A673 (cell line): ENCODE measurements at regions of chr12 and their contacts with region 1.

Region 1: DNA sequence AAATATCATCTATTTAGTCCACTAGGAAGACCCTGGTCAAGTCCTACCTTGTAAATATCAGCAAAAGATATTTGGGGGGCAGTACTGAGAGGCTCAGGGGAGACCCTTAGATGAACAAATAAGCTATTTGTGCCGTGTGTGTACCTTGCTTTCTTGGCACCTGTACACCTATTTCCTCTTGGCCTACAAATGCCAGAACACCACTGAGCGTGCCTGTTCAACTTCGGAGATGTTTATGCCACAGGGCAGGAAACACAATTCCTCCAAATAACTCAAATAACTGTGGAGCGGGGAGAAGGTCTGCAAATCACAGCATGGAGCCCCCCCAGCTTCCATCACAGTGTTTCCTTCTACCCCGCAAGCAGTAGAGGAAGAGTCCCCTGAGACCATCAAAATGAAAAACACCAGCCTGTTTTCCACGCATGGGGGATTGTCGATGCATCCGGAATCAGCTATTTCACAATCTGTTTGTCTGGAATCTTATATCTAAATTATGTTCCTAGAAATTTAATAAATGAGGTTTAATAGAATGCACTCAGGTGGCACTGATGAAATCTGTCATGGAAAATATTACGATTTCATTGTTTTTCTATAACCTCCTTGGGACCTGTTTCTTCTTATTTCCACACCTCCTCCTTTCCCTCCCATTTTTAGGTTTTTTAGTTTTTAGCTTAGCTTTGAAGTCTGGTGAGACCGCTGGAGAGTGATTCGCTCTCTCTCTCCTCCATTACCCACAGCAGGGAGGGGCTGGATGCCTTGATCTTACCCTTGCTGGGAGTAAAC is 254.0 kb upstream of the SRRM4 start:
- DNase-seq: no peak
- H3K4me3 ChIP-seq: no peak overlapping the region
- H3K27ac ChIP-seq: no peak overlapping the region
- H3K4me1 ChIP-seq: no peaks in the 10 kb centered on the region
- H3K27me3 ChIP-seq: peaks cover 9% of the 10 kb centered on the region
- CTCF ChIP-seq: no peak

Region 2: DNA sequence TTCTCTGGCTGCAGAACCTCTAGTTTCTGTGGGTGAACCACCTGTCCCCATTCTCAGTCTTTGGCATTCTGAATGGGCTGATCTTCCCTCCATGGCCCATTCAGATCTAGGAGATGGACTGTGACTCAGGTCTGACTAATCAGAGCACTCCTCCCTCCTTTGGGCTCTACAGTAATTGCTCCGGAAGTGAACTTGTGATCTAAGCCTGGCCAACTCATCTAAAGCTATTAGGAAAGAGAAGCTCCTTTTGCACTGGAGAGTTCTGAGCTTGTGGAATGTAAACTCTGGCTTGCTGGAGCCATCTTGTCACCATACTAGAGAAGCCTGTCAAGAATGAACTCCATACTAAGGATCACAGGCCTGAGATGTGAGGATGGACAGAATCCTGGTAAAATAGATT is 182.8 kb before region 1 on chr12:
- CTCF ChIA-PET with region 1: no interaction called
- POLR2A ChIA-PET with region 1: no interaction called
- intact Hi-C with region 1: no loop called
- DNase-seq: no peak
- H3K4me3 ChIP-seq: no peak overlapping the region
- H3K27ac ChIP-seq: no peak overlapping the region
- H3K4me1 ChIP-seq: no peaks in the 10 kb centered on the region
- H3K27me3 ChIP-seq: no peaks in the 10 kb centered on the region
- CTCF ChIP-seq: no peak

Region 3: DNA sequence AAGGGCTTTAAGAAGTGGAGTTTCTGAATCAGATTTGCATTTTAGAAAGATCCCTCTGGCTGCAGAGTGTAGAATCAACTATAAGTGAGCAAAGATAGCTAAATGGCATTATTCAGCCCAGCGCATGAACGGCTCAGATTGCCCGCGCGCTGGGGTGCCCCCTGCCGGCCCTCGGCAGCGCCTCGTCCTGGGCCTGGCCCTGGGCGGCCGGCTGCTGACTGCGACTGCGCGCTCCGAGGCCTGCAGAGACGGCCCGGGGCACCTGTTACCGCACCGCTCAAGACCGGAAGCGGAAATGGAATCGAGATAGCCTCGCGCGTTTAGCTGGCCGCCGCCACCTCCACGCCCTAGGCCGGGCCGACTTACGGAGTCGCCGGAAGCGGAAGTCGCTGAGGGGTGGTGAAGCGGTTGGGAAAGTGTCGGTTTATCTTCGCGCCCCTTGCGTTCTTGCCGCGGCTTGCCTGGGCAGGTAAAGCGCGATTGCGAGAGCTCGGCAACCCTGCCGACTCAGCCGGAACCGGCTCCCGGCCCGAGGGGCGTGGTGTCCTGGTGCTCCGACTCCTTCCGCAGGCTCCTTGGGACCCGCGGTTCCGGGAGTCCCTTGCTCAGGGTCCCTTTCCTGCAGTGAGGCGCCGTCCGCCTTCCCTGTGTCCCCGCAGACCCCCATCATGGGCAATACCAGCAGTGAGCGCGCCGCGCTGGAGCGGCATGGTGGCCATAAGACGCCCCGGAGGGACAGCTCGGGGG is 940.4 kb after region 1 on chr12 and contains the start of gene PRKAB1:
- CTCF ChIA-PET with region 1: no interaction called
- POLR2A ChIA-PET with region 1: no interaction called
- intact Hi-C with region 1: loop called (anchors 5 kb)
- DNase-seq: peak; percentile 99
- H3K4me3 ChIP-seq: peak within 1 kb of the TSS; percentile 88
- H3K27ac ChIP-seq: peak within 1 kb of the TSS; percentile 86
- H3K4me1 ChIP-seq: peaks cover 9% of the 10 kb centered on the region
- H3K27me3 ChIP-seq: no peaks in the 10 kb centered on the region
- CTCF ChIP-seq: peak; percentile 87
- total RNA-seq, gene PRKAB1: 33.7 and 34.1 TPM in 2 replicates

Region 4: GRCh38 chr12:119704065-119704747 is 976.8 kb after region 1 on chr12:
- CTCF ChIA-PET with region 1: no interaction called
- POLR2A ChIA-PET with region 1: no interaction called
- intact Hi-C with region 1: no loop called
- DNase-seq: no peak
- H3K4me3 ChIP-seq: no peak overlapping the region
- H3K27ac ChIP-seq: no peak overlapping the region
- H3K4me1 ChIP-seq: no peaks in the 10 kb centered on the region
- H3K27me3 ChIP-seq: no peaks in the 10 kb centered on the region
- CTCF ChIP-seq: no peak